Activated CD4-positive, alpha-beta T cell treated with anti-CD3 and anti-CD28 coated beads, Interleukin-2, amount 10 ng/mL, durations not matched to agents 24 days and 14 days (primary cell): ENCODE measurements at regions of chr6 and their contacts with region 1.

Region 1: GRCh38 chr6:12289933-12290820 is at the start of gene EDN1:
- DNase-seq: peak; percentile 86
- H3K4me3 Mint-ChIP-seq: peak within 1 kb of the TSS; percentile 80
- H3K27ac Mint-ChIP-seq: peak within 1 kb of the TSS; percentile 7
- H3K4me1 Mint-ChIP-seq: peaks cover 17% of the 10 kb centered on the region
- H3K27me3 Mint-ChIP-seq: peaks cover 39% of the 10 kb centered on the region
- total RNA-seq, gene EDN1: 0.26 TPM in 1 of 2 replicates, not detected in the other

Region 2: GRCh38 chr6:11585426-11586016 is 704.7 kb before region 1 on chr6:
- intact Hi-C with region 1: loop called (anchors 10 kb)
- DNase-seq: peak; percentile 66
- H3K4me3 Mint-ChIP-seq: no peak overlapping the region
- H3K27ac Mint-ChIP-seq: no peak overlapping the region
- H3K4me1 Mint-ChIP-seq: no peaks in the 10 kb centered on the region
- H3K27me3 Mint-ChIP-seq: peaks cover 13% of the 10 kb centered on the region

Region 3: GRCh38 chr6:11653028-11653583 is 637.1 kb before region 1 on chr6:
- intact Hi-C with region 1: loop called (anchors 1 kb)
- DNase-seq: peak; percentile 85
- H3K4me3 Mint-ChIP-seq: peak overlapping the region; percentile 3
- H3K27ac Mint-ChIP-seq: peak overlapping the region; percentile 52
- H3K4me1 Mint-ChIP-seq: peaks cover 13% of the 10 kb centered on the region
- H3K27me3 Mint-ChIP-seq: peaks cover 6% of the 10 kb centered on the region

Region 4: GRCh38 chr6:11929241-11929850 is 360.8 kb before region 1 on chr6:
- intact Hi-C with region 1: no loop called
- DNase-seq: no peak
- H3K4me3 Mint-ChIP-seq: no peak overlapping the region
- H3K27ac Mint-ChIP-seq: no peak overlapping the region
- H3K4me1 Mint-ChIP-seq: no peaks in the 10 kb centered on the region
- H3K27me3 Mint-ChIP-seq: peaks cover 2% of the 10 kb centered on the region

Region 5: GRCh38 chr6:12150812-12151432 is 139.3 kb before region 1 on chr6:
- intact Hi-C with region 1: loop called (anchors 2 kb)
- DNase-seq: peak; percentile 78
- H3K4me3 Mint-ChIP-seq: no peak overlapping the region
- H3K27ac Mint-ChIP-seq: no peak overlapping the region
- H3K4me1 Mint-ChIP-seq: peaks cover 21% of the 10 kb centered on the region
- H3K27me3 Mint-ChIP-seq: no peaks in the 10 kb centered on the region

Region 6: DNA sequence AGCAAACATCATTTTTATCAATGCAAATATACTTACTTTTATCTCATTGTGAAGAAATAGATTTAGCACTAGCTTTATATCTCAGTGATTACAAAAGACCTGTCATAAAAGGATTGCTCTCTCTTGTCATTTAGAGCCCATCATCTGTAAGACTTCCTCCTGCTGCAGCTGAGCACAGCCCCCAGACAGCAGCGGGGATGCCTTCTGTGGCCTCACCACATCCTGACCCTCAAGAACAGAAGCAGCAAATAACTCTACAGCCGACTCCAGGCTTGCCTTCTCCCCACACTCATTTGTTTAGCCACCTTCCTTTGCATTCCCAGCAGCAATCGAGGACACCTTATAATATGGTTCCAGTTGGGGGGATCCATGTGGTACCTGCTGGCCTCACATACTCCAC is 127.0 kb before region 1 on chr6:
- intact Hi-C with region 1: no loop called
- DNase-seq: peak; percentile 88
- H3K4me3 Mint-ChIP-seq: peak overlapping the region; percentile 44
- H3K27ac Mint-ChIP-seq: no peak overlapping the region
- H3K4me1 Mint-ChIP-seq: peaks cover 33% of the 10 kb centered on the region
- H3K27me3 Mint-ChIP-seq: no peaks in the 10 kb centered on the region

Region 7: DNA sequence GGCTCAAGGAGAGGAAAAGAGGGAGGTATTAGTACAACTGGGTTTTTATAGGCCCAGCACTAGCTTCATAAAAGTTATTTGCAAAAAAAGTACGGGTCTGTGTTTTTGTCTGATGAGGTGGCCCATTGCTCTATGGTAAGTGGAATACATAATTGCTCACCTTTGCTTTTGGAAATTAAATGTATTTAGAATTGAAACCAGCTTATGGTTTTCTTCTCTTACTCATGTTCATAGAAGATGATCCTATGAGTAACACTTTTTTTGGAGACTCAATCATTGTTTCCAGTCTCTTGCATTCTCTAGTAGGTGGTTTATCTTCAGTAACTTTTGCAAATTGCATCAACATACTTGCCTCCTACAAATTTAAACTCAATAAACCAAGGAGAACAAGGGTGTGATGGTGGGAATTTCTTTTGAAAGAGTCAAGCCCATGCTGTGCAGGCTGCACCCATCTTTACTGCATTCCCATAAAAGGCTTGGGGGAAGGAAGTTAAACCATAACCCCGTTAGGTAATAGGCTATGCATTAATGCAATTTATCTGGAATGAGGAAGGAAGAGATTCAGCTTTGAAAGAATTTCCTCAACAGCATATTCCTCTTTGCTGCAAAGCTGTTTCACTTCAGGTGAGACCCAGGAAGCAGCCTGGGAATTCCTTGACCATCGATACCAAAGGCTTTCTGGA is 48.5 kb before region 1 on chr6:
- intact Hi-C with region 1: loop called (anchors 5 kb)
- DNase-seq: no peak
- H3K4me3 Mint-ChIP-seq: no peak overlapping the region
- H3K27ac Mint-ChIP-seq: peak overlapping the region; percentile 32
- H3K4me1 Mint-ChIP-seq: peaks cover 13% of the 10 kb centered on the region
- H3K27me3 Mint-ChIP-seq: no peaks in the 10 kb centered on the region

Region 8: GRCh38 chr6:12605888-12606345 is 315.7 kb after region 1 on chr6:
- intact Hi-C with region 1: loop called (anchors 2 kb)
- DNase-seq: peak; percentile 84
- H3K4me3 Mint-ChIP-seq: peak overlapping the region; percentile 39
- H3K27ac Mint-ChIP-seq: no peak overlapping the region
- H3K4me1 Mint-ChIP-seq: peaks cover 13% of the 10 kb centered on the region
- H3K27me3 Mint-ChIP-seq: peaks cover 7% of the 10 kb centered on the region

Region 9: DNA sequence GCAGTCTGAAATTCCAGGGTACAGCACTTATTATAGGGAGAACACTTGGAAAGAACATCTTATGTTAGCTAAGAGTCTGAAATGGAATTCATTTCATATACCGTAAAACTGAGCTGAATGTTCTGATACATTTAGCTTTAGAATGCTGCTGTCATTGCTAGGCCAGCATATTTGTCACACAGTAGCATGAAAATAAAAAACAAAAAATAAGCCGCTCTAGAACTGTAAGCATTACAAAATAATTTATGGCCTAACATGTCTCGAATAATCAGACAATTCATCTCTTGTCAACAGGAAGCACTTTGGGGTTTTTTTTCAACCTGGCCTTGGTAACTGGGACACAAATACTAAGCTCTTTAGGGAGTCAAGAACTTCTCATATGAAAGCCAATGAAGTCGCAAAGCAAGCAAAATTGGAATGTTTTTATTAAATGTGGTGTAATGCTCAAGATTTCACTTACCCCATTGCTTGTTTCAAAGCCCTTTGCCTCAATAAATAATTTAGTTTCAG is 542.1 kb after region 1 on chr6:
- intact Hi-C with region 1: no loop called
- DNase-seq: no peak
- H3K4me3 Mint-ChIP-seq: no peak overlapping the region
- H3K27ac Mint-ChIP-seq: no peak overlapping the region
- H3K4me1 Mint-ChIP-seq: no peaks in the 10 kb centered on the region
- H3K27me3 Mint-ChIP-seq: no peaks in the 10 kb centered on the region